Gastrocnemius medialis (tissue), 4 donors: ENCODE measurements at regions of chr12 and their contacts with region 1.

Region 1: DNA sequence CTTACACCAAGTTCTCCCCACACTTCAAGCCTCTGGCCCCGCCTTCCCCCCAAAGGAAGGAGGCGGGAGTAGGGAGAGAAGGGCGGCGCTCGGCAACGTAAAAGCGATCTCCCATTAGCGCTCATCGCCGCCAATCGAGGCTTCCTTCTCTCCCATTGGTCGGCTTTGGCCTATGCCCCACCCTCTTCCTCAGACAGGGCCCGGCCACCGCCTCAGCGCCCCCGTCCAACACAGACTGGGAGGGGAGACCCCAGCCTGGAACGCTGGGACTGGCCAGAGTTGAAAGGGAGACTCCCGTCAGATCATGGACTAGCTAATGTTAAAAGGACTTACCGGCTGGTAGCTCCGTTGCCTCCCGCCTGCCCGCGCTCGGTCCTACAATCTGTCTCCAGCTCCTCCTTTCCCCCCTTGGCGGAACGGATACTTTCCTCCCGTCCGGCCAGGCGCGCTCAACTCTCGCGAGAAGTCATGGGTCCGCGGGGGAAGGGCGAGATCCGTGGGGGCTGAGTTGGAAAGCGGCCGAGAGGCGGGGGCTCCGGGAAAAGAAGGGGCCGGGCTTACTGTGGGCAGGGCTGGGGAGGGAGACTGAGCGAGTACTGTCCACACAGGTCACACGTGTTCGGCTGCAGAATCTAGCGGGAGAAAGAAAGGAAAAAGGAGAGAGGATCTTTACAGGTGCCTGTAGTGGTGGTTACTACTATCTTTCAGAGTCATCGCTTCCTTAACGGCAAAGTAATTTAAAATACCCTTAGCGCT is at the start of gene ATF7:
- DNase-seq: peak; percentile 97 to 98
- ATAC-seq: peak; percentile 96 to 97
- H3K4me3 ChIP-seq: peak within 1 kb of the TSS; percentile 67 to 88 (median 78)
- H3K27ac ChIP-seq: peak within 1 kb of the TSS; percentile 93 to 96 (median 95)
- H3K4me1 ChIP-seq: peaks cover 36 to 40% of the 10 kb centered on the region in 2 donors
- H3K27me3 ChIP-seq: no peaks in the 10 kb centered on the region
- CTCF ChIP-seq: peak in 1 of 5 experiments; percentile 11
- POLR2A ChIP-seq: peak; percentile 57 to 69
- total RNA-seq, gene ATF7: 21.9 to 47.9 (median 26.3) TPM

Region 2: DNA sequence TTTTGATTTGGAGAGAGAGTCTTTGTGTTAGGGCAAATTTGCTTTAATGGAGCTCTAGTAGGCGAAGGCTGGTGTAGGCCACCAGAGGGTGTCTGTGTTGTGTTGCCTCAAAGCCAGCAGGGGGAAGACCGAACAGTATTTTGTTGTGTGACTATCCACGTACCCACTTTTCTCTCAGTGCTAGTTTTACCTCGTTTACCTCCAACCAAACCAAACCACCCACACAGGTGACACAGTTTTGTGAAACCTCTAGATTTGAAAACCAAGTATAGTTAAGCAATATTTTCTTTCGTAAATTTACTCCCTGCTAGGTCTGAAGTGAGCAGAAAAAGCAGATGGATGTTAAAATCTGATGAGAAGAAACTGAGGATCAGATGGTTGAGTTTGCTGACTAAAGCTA is 82.6 kb before region 1 on chr12:
- in situ Hi-C with region 1: loop called in 1 of 4 experiments (anchors 10 kb)
- intact Hi-C with region 1: no loop called
- DNase-seq: peak; percentile 19 to 60
- ATAC-seq: peak; percentile 86 to 97
- H3K4me3 ChIP-seq: no peak overlapping the region
- H3K27ac ChIP-seq: peak overlapping the region; percentile 5 to 67 (median 34)
- H3K4me1 ChIP-seq: peaks cover 0 to 9% of the 10 kb centered on the region in 2 donors
- H3K27me3 ChIP-seq: no peaks in the 10 kb centered on the region
- CTCF ChIP-seq: peak; percentile 77 to 90 (median 79)
- POLR2A ChIP-seq: no peak

Region 3: DNA sequence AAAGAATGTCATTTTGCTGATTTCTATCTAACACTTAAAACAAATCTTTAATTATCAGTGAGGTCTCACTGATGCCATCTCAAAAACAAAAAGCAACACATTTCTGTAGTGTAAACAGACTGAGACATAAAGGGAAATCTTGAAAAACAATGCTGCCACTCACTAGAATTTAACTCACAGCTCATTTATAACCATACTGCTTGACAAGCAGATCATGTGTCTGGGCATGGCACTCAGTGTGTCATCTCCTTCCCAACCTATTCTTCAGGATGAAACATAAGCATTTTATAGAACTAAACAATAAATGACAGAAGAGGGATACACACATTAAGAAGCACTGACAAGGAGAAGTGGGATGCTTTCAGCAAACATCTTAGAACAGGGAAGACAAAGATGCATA is 22.3 kb before region 1 on chr12:
- in situ Hi-C with region 1: no loop called
- intact Hi-C with region 1: loop called (anchors 2 kb)
- DNase-seq: no peak
- ATAC-seq: peak in 1 of 2 donors; percentile 30
- H3K4me3 ChIP-seq: no peak overlapping the region
- H3K27ac ChIP-seq: peak overlapping the region in 1 of 4 donors; percentile 10
- H3K4me1 ChIP-seq: peaks cover 33 to 39% of the 10 kb centered on the region in 2 donors
- H3K27me3 ChIP-seq: no peaks in the 10 kb centered on the region
- CTCF ChIP-seq: no peak
- POLR2A ChIP-seq: no peak

Region 4: DNA sequence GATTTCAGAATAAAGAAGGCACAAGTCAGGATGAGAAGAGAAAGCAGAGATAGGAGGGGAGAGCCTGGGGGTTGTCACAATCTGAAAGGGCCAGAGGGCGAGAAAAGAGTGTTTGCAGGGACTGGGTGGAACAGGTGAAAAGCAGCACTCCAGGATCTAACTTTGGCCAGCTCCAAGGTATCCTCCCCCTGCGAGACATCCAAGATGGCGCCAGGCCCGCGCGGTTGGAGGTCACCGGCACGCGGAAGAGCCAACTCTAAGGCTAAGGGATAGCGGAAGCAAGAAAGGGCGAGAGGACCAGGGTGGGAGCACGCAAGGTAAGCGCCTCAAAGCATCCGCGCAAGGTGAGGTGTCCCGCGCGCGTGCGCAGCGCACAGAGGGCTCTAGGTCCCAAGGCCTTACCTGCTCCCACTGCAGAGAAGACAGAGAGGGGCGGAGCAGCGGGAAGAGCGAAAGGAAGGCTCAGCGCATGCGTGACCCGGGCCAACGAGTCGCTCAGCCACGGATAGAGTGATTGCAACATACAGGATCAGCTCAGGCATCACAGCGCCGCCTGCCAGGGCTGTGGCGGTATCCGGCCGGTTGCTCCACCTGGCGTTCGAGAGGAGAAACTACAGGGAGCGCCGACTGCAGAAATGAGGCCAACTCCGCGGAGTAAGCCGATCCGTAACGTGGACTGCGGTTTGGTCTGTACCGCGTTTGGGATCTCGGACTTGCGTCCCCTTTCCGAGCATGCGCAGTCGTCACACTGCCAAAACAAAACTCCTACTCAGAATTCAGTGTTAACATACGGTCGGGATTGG is 49.7 kb after region 1 on chr12 and contains the start of gene ATP5MC2:
- in situ Hi-C with region 1: loop called in 2 of 4 experiments (anchors 5 to 10 kb)
- intact Hi-C with region 1: loop called (anchors 1 kb)
- DNase-seq: peak; percentile 98
- ATAC-seq: peak; percentile 89 to 93
- H3K4me3 ChIP-seq: peak within 1 kb of the TSS; percentile 81 to 84 (median 82)
- H3K27ac ChIP-seq: peak within 1 kb of the TSS; percentile 93 to 99 (median 96)
- H3K4me1 ChIP-seq: peaks cover 26 to 31% of the 10 kb centered on the region in 2 donors
- H3K27me3 ChIP-seq: no peaks in the 10 kb centered on the region
- CTCF ChIP-seq: peak; percentile 95 to 99 (median 99)
- POLR2A ChIP-seq: peak; percentile 59 to 72
- total RNA-seq, gene ATP5MC2: 428 to 714 (median 580) TPM

Region 5: DNA sequence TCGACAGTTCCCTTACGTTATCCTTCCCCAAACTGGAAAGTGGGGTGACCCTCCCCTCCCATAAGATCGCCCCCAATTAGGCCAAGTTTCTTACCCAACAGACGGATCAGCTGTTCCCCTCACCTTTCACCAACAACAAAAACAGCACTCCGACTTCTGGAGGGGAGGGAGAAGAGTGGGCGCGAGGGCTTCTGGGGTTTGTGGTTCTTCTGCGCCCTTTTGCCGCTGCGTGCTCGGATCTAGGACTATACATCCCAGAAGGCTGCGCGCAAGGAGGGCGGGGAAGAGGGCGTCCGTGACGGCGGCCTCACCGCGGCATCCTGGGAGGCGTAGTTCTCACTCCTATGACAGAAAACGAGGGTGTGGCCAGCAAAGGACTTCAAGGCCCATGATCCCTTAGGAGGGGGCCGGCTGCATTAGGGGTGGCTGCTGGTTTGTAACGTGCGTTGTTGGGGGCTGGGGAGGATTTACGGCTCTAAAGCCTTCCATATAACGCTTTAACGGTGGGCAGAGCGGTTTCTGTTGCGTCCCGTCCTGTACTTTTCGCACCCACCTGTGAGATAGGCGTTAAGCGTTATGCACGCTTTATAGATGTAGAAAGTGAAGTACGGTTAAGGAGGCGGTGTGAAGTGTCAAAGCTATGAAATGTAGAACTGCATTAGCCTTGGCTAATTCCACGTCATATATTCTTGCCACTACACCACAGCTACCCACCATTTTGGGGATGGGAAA is 101.4 kb after region 1 on chr12 and contains the start of gene CALCOCO1:
- in situ Hi-C with region 1: no loop called
- intact Hi-C with region 1: loop called (anchors 5 kb)
- DNase-seq: peak; percentile 98 to 99
- ATAC-seq: peak; percentile 96 to 97
- H3K4me3 ChIP-seq: peak within 1 kb of the TSS; percentile 69 to 93 (median 82)
- H3K27ac ChIP-seq: peak within 1 kb of the TSS; percentile 87 to 98 (median 93)
- H3K4me1 ChIP-seq: peaks cover 18% of the 10 kb centered on the region in 2 donors
- H3K27me3 ChIP-seq: no peaks in the 10 kb centered on the region
- CTCF ChIP-seq: no peak
- POLR2A ChIP-seq: peak; percentile 70 to 91
- total RNA-seq, gene CALCOCO1: 158 to 385 (median 239) TPM